ENCODE measurements at regions of chr22 and their contacts with region 1.

Region 1: GRCh38 chr22:38034274-38034882 is 22.8 kb upstream of the PICK1 start:
- DNase-seq: peak; percentile 73 to 98 (median 85)

Region 2: DNA sequence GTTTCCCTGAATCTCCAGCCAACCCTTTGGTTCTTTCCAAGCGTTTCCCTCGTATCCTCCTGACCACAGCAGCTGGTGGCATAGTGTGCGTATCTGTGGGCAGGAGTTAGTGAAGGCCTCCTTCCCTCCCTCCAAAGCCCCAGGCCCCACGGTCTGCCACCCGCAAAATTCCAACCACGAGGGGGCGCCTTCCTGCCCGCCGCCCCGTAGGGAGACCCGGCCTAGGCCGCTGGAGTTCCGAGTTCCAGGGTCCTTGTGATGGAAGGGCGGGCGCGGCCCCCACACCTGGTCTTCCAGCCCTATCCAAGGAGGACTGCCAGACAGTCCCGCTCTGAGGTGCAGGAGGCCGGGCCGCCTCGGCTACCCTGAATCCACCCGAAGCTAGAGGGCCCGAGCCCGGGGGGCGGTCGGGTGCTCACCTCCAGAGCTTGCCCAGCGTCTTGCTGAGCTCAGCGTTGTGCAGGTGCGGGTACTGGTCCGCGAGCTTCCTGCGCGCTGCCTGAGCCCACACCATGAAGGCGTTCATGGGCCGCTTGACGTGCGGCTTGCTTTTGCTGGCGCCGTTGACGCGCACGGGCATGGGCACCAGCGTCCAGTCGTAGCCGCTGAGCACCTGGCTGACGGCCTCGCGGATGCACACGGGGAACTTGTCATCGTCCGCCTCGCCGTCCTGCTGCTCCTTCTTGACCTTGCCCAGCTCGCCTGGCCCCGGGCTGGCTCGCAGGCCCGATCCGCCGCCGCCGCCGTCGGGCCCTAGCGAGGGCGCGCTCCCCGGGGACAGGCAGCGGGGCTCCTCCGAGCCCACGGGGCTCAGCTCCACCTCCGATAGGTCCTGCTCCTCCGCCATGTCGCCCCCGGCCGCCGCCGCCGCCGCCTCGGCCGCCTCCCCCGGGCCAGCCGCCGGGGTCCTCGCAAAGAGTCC is 51.2 kb before region 1 on chr22:
- intact Hi-C with region 1: loop called (anchors 5 kb)
- DNase-seq: peak in 2 of 10 donors; percentile 65 to 68